CD4-positive, alpha-beta memory T cell (primary cell): ENCODE measurements at regions of chr20 and their contacts with region 1.

Region 1: GRCh38 chr20:5735845-5736525 is 14.2 kb upstream of the SHLD1 start:
- DNase-seq: no peak
- H3K4me3 ChIP-seq: no peak overlapping the region
- H3K4me3 Mint-ChIP-seq: peak overlapping the region in 4 of 8 donors; percentile 15 to 57 (median 44)
- H3K27ac ChIP-seq: no peak overlapping the region
- H3K27ac Mint-ChIP-seq: peak overlapping the region; percentile 82 to 98 (median 96)
- H3K4me1 ChIP-seq: peaks cover 33% of the 10 kb centered on the region
- H3K4me1 Mint-ChIP-seq: peaks cover 20 to 42% (median 34%) of the 10 kb centered on the region in 4 donors
- H3K27me3 ChIP-seq: no peaks in the 10 kb centered on the region
- H3K27me3 Mint-ChIP-seq: no peaks in the 10 kb centered on the region

Region 2: GRCh38 chr20:5749952-5750779 is 14.2 kb after region 1 on chr20 and contains the start of gene SHLD1:
- CTCF ChIA-PET with region 1: interaction called, 4 read pairs
- POLR2A ChIA-PET with region 1: interaction called, 5 read pairs
- intact Hi-C with region 1: loop called (anchors 1 kb)
- DNase-seq: peak; percentile 75 to 83 (median 81)
- H3K4me3 ChIP-seq: peak within 1 kb of the TSS; percentile 70 to 96
- H3K4me3 Mint-ChIP-seq: peak within 1 kb of the TSS; percentile 87 to 100 (median 96)
- H3K27ac ChIP-seq: peak within 1 kb of the TSS; percentile 69
- H3K27ac Mint-ChIP-seq: peak within 1 kb of the TSS; percentile 92 to 99 (median 98)
- H3K4me1 ChIP-seq: peaks cover 28% of the 10 kb centered on the region
- H3K4me1 Mint-ChIP-seq: peaks cover 16 to 34% (median 23%) of the 10 kb centered on the region in 4 donors
- H3K27me3 ChIP-seq: no peaks in the 10 kb centered on the region
- H3K27me3 Mint-ChIP-seq: no peaks in the 10 kb centered on the region
- total RNA-seq, gene SHLD1: 13.6 to 16.3 TPM